WTC11 (cell line): ENCODE measurements at regions of chr6 and their contacts with region 1.

Region 1: DNA sequence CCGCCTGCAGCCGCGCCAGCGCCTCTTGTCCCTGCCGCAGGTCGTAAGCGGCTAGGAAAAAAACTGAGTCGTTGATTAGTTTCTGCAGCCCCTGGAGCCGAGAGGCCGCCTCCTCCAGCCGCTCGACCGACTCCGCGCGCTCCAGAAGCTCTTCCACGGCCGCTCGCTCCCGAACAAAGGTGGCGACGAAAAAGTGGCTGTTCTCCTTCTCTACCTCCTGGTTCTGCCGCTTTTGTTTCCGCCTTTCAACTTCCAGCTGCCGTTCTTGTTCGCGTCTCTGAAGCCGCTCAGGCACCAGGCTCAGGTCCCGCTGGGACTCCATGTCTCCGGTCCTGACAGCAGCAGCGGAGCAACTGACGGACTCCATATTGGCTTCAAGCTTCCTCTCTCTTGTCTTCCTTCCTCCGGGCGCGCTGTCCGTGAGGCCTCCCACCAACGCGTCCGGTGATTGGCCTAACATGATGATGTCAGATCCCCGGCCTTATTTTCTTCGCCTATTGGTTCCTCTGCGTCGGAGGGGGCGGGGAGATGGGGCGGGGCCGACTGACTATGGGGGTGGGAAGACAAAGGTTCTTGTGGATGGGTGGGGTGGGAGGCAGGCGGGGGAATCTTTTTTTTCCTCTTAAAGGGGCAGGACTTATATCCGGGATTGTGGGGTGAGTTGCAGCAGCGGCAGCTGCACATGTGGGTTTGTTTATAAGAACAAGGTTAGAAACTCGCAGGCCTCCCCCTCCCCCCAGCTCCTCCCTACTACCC is at the start of gene TBCC:
- DNase-seq: peak; percentile 93
- ATAC-seq: peak; percentile 78
- H3K4me3 Mint-ChIP-seq: peak within 1 kb of the TSS; percentile 100
- H3K27ac Mint-ChIP-seq: peak within 1 kb of the TSS; percentile 100
- H3K4me1 Mint-ChIP-seq: peaks cover 16% of the 10 kb centered on the region
- H3K27me3 Mint-ChIP-seq: no peaks in the 10 kb centered on the region
- CTCF ChIP-seq: no peak
- total RNA-seq, gene TBCC: 24.7 to 27.3 TPM (median 25.0 TPM) in 3 replicates

Region 2: DNA sequence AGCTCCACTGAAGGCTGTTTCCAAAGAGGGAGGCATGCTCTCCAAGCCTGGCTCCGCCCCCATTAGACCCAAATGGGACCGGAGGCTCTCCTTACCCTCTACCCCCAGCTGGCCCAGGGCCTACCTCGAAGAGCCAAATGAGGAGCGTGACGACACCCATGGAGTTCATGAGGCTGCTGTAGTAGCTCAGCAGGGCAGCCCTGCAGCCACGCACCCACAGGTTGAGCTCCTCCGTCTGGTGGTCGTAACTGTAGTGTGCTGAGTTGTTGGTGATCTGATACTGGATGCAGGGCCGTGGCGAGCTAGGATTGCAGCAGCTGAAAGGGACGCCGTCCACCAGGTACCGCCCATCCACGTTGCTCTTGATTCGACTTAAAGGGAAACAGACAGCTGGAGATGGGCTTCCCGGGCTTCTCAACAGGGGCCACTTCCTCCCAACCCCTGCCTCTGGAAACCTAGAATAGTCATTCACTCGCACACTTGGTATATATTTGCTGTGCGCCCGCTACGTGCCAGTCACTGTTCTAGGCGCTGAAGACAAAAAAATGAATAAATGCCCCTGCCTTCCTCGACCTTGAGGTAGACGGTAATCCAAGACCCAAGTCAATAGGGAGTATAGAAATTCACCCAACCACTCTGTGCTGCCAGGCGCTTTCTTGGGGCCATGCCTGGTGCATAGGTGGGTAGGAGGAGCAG is 41.5 kb before region 1 on chr6:
- CTCF ChIA-PET with region 1: interaction called, 4 read pairs
- POLR2A ChIA-PET with region 1: interaction called, 13 read pairs
- DNase-seq: peak; percentile 61
- ATAC-seq: peak; percentile 85
- H3K4me3 Mint-ChIP-seq: peak overlapping the region; percentile 71
- H3K27ac Mint-ChIP-seq: peak overlapping the region; percentile 88
- H3K4me1 Mint-ChIP-seq: peaks cover 14% of the 10 kb centered on the region
- H3K27me3 Mint-ChIP-seq: no peaks in the 10 kb centered on the region
- CTCF ChIP-seq: no peak

Region 3: GRCh38 chr6:42756722-42757121 is 10.8 kb after region 1 on chr6:
- CTCF ChIA-PET with region 1: interaction called, 4 read pairs
- POLR2A ChIA-PET with region 1: interaction called, 13 read pairs
- DNase-seq: peak; percentile 39
- ATAC-seq: peak; percentile 63
- H3K4me3 Mint-ChIP-seq: peak overlapping the region; percentile 17; the same call in 1 of the 2 replicates
- H3K27ac Mint-ChIP-seq: peak overlapping the region; percentile 66; the same call in 1 of the 2 replicates
- H3K4me1 Mint-ChIP-seq: peaks cover 44% of the 10 kb centered on the region
- H3K27me3 Mint-ChIP-seq: no peaks in the 10 kb centered on the region
- CTCF ChIP-seq: no peak

Region 4: DNA sequence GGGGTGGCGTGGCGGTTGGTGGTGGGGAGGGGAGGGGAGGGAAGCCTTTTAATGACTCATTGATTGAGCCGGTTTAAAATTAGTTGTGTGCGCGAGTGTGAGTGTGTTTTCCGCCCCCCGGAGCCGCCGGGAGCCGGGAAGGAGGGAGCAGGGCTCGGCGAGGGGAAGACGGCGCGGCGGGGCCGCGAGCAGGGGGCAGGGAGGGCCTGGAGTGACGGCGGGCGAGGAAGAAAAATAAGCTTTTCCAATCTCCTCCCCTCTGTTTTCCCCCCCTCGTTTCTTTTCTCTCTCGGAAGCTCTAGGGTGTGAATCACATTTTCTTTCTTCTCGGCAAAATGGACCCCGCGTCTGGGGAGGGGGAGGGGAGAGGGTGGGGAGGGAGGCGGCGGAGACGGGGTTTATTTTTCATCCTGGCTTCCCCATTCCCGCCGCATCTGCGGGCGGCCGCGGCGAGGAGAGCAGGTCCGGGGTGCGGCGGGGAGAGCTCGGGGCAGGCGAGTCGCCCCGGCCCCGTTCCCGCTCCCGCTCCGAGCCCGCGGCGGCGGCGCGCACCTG is 36.8 kb after region 1 on chr6:
- CTCF ChIA-PET with region 1: no interaction called
- POLR2A ChIA-PET with region 1: interaction called, 42 read pairs
- DNase-seq: peak; percentile 61
- ATAC-seq: peak; percentile 54
- H3K4me3 Mint-ChIP-seq: peak overlapping the region; percentile 85
- H3K27ac Mint-ChIP-seq: peak overlapping the region; percentile 99
- H3K4me1 Mint-ChIP-seq: peaks cover 22% of the 10 kb centered on the region
- H3K27me3 Mint-ChIP-seq: no peaks in the 10 kb centered on the region
- CTCF ChIP-seq: no peak

Region 5: GRCh38 chr6:42890311-42891198 is 144.7 kb after region 1 on chr6:
- CTCF ChIA-PET with region 1: no interaction called
- POLR2A ChIA-PET with region 1: interaction called, 14 read pairs
- DNase-seq: peak; percentile 93
- ATAC-seq: peak; percentile 90
- H3K4me3 Mint-ChIP-seq: peak overlapping the region; percentile 87
- H3K27ac Mint-ChIP-seq: peak overlapping the region; percentile 97
- H3K4me1 Mint-ChIP-seq: peaks cover 13% of the 10 kb centered on the region
- H3K27me3 Mint-ChIP-seq: no peaks in the 10 kb centered on the region
- CTCF ChIP-seq: no peak